Right cardiac atrium (tissue), 5 donors: ENCODE measurements at regions of chr1 and their contacts with region 1.

Region 1: DNA sequence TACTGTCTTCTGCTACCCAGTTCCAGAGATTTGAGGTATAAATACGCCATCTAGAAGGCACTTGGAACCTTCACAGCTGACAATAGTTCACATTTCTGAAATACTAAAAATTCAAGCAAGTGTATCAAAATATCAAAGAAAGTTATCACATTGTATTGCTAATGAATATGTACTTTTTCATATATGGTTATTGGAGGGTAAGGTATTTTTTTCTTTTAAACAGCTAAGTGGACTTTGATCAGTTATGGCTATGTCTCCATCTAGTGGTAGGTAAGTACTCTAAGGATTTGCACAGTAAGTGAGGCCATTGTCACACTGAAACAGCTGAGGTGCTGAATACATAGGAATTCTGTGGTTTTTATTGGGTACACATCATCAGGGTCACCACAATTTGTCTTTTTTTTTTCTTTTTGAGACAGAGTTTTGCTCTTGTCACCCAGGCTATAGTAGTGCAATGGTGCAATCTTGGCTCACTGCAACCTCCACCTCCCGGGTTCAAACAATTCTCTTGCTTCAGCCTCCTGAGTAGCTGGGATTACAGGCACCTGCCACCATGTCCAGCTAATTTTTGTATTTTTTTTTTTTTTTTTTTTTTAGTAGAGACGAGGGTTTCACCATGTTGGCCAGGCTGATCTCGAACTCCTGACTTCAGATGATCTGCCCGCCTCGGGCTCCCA is 49.1 kb upstream of the CR2 start:
- DNase-seq: no peak
- ATAC-seq: peak; percentile 54 to 74
- H3K4me3 ChIP-seq: no peak overlapping the region
- H3K27ac ChIP-seq: no peak overlapping the region
- H3K4me1 ChIP-seq: no peaks in the 10 kb centered on the region
- H3K27me3 ChIP-seq: no peaks in the 10 kb centered on the region

Region 2: DNA sequence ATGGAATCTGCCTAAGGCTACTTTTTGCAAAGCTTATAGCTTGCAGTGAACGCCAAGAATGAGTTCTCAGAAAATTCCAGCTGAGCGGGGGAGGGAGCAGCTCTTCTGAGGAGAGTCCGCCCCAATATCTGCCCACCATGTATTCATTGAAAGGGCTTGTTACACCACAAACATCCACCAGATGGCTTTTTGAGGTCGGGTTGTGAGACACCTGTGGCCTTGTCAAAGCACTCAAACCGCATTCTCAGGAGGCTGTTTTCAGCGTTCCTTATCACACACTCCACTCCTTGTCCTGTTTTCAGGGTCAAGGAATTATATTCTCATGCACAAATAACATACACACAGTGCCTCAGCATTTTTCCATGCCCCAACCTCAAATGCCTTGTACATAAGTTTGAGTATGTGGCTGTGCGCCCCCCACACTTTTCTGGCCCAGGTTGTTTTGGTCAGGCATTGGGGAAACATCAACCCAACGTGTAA is 320.2 kb before region 1 on chr1:
- intact Hi-C with region 1: loop called in 3 of 4 experiments (anchors 5 kb)
- DNase-seq: no peak
- ATAC-seq: peak; percentile 61 to 80
- H3K4me3 ChIP-seq: no peak overlapping the region
- H3K27ac ChIP-seq: no peak overlapping the region
- H3K4me1 ChIP-seq: no peaks in the 10 kb centered on the region
- H3K27me3 ChIP-seq: no peaks in the 10 kb centered on the region

Region 3: DNA sequence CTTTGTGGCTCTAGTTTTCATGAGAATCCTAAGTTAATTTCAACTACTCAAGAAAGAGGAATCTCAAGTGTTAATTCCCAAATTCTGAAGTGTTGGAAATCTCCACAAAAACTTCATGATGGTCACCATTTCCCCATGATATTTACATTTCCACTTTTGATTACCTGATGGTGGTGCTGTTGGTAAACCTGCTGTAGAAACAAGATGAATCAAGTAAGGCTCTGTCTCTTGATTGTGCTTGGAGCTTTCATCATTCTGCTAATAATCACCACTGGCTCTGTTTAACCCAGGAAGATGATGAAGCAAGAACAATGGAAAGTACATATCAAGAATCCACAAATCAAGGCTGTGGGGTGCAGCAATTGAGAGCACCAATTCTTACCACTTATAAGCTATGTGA is 223.1 kb before region 1 on chr1:
- intact Hi-C with region 1: loop called in 2 of 4 experiments (anchors 10 kb)
- DNase-seq: no peak
- ATAC-seq: no peak
- H3K4me3 ChIP-seq: no peak overlapping the region
- H3K27ac ChIP-seq: no peak overlapping the region
- H3K4me1 ChIP-seq: peaks cover 2% of the 10 kb centered on the region
- H3K27me3 ChIP-seq: no peaks in the 10 kb centered on the region

Region 4: GRCh38 chr1:207486198-207486597 is 81.2 kb after region 1 on chr1:
- intact Hi-C with region 1: no loop called
- DNase-seq: no peak
- ATAC-seq: no peak
- H3K4me3 ChIP-seq: no peak overlapping the region
- H3K27ac ChIP-seq: no peak overlapping the region
- H3K4me1 ChIP-seq: no peaks in the 10 kb centered on the region
- H3K27me3 ChIP-seq: peaks cover 4% of the 10 kb centered on the region